ENCODE measurements at regions of chr3 and their contacts with region 1.

Region 1: GRCh38 chr3:151227807-151228665 is 25.0 kb upstream of the GPR171 start:
- DNase-seq: peak; percentile 68 to 75
- H3K4me3 ChIP-seq: no peak overlapping the region
- H3K27ac ChIP-seq: peak overlapping the region; percentile 40
- H3K4me1 ChIP-seq: peaks cover 28% of the 10 kb centered on the region
- H3K27me3 ChIP-seq: no peaks in the 10 kb centered on the region
- CTCF ChIP-seq: peak; percentile 98

Region 2: DNA sequence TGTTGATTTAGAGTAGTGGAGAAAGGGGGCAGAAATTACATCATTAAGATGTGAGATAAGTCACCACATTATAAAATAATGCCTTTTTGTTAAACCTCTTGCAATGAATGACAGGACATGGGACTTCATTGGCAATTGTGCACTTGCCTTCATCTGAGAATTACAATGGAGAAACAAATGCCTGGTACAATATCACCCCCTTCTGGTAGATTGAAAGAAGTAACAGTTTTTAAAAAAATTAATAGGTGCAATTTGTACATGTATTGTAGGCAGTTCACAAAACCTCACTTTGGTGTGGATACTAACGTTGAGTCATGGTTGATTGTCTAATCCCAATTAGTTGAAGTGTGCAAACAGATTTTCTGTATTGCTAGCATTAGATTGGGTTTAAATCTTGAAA is 54.9 kb after region 1 on chr3:
- CTCF ChIA-PET with region 1: interaction called, 4 read pairs
- POLR2A ChIA-PET with region 1: no interaction called
- intact Hi-C with region 1: loop called (anchors 1 kb)
- DNase-seq: peak in 1 of 2 experiments; percentile 54
- H3K4me3 ChIP-seq: no peak overlapping the region
- H3K27ac ChIP-seq: no peak overlapping the region
- H3K4me1 ChIP-seq: peaks cover 8% of the 10 kb centered on the region
- H3K27me3 ChIP-seq: no peaks in the 10 kb centered on the region
- CTCF ChIP-seq: peak; percentile 91

Region 3: DNA sequence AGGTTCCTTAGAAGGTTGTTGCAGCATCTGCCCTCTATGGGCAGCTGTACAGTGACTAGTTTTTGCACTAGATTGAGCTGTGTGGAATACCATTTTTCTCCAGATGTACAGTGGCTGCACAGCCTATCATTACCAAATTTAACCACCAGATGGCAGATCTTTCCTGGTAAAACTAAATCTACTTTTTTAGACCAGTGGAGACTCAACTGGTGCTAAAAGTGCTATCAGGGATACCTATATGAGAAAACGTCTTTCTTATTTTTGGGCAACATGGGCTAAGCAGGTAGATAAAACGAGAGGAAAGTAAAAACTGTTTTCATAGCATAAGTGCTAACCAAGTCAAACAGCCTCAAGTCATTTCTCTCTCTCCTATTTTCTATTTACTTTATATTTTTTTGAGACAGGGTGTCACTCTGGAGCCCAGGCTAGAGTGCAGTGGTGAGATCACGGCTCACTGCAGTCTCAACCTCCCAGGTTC is 211.7 kb after region 1 on chr3:
- CTCF ChIA-PET with region 1: no interaction called
- POLR2A ChIA-PET with region 1: no interaction called
- intact Hi-C with region 1: loop called (anchors 2 kb)
- DNase-seq: peak; percentile 40 to 55
- H3K4me3 ChIP-seq: no peak overlapping the region
- H3K27ac ChIP-seq: no peak overlapping the region
- H3K4me1 ChIP-seq: peaks cover under 1% of the 10 kb centered on the region; the same call in 1 of the 2 replicates
- H3K27me3 ChIP-seq: no peaks in the 10 kb centered on the region
- CTCF ChIP-seq: peak; percentile 91

Measured in PC-9 (cell line).